Activated CD4-positive, alpha-beta T cell treated with anti-CD3 and anti-CD28 coated beads for 36 hours (primary cell): ENCODE measurements at regions of chr1 and their contacts with region 1.

Region 1: GRCh38 chr1:100358210-100358609 is 5.9 kb downstream of the CDC14A start:
- DNase-seq: peak; percentile 41
- ATAC-seq: no peak
- H3K4me3 Mint-ChIP-seq: no peak overlapping the region
- H3K27ac Mint-ChIP-seq: peak overlapping the region; percentile 61
- H3K4me1 Mint-ChIP-seq: peaks cover 79% of the 10 kb centered on the region
- H3K27me3 Mint-ChIP-seq: no peaks in the 10 kb centered on the region

Region 2: GRCh38 chr1:100423832-100424337 is 65.7 kb after region 1 on chr1:
- CTCF ChIA-PET with region 1: interaction called, 10 read pairs
- POLR2A ChIA-PET with region 1: no interaction called
- intact Hi-C with region 1: no loop called
- DNase-seq: peak; percentile 28
- ATAC-seq: peak; percentile 66
- H3K4me3 Mint-ChIP-seq: peak overlapping the region; percentile 50
- H3K27ac Mint-ChIP-seq: peak overlapping the region; percentile 75
- H3K4me1 Mint-ChIP-seq: peaks cover 74% of the 10 kb centered on the region
- H3K27me3 Mint-ChIP-seq: no peaks in the 10 kb centered on the region